ENCODE measurements at regions of chr7 and their contacts with region 1.

Region 1: DNA sequence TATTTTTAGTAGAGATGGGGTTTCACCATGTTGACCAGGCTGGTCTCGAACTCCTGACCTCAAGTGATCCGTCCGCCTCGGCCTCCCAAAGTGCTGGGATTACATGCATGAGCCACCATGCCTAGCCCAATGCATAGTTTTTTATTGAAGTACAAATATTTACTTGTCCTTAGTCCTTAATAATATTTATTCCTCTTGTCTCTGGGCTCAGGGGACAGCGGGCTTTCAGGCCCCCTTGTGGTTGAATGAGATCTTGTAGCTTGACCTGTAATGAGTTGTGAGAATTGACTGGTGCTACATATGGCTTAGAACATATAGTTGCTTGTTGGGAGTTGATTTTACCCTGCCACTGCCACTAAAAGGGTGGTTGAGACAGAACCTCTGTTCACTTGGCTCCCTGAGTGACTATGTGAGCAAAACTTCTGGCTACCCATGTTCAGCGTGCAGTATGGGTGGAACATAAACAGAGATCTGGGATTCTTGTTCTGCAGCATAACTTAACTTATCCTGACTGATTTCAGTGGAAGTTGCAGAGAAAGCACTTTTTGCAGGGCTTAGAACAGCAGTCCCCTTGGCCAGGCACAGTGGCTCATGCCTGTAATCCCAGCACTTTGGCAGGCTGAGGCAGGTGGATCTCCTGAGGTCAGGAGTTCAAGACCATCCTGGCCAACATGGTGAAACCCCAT is 14.9 kb downstream of the CCL26 start:
- DNase-seq: no peak
- H3K4me3 ChIP-seq: no peak overlapping the region
- H3K27ac ChIP-seq: no peak overlapping the region
- H3K4me1 ChIP-seq: no peaks in the 10 kb centered on the region
- H3K27me3 ChIP-seq: no peaks in the 10 kb centered on the region
- CTCF ChIP-seq: peak; percentile 20 to 56 (median 51)
- EP300 ChIP-seq: no peak
- POLR2A ChIP-seq: no peak
- RAD21 ChIP-seq: peak; percentile 47 to 69

Region 2: DNA sequence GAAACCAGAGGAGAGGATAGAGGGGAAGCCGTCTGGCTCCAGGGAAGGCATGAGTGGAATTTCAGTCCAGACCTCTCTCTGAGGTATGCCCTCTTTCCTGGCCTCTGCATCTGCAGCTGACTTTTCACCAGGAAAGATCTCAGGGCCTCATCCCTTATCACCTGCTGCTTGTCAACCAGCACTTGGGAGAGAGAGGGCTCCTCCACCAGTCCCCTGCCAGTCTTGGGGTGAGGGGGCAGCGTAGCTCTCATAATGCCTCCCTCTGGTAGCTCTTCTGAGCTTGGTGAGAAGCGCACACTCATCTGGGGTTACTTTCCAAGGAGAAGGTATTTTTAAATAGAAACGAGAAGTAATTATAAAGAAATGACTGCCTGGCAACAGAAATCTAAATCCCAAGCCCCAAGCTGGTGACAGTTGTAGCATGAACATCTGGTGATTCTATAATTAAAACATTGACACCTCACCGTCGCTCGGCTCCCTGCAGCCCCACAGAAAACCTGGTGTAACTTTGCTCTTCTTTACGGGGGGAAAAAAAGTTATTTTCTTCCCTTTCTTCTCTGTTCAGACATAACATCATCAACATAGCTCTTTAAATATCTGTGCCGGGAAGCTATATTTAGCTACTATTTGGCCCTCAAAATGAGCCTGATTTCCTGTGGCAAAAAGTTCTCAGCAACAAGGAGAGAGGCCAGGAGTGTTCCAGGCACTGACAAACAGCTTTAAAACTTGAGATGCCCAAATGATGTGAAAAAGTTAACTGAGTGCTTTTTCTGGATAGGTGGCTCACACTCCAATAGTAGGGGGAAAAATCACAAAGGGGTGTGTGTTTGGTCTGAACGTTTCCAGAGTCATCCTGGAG is 45.2 kb before region 1 on chr7:
- CTCF ChIA-PET with region 1: interaction called, 10 read pairs
- POLR2A ChIA-PET with region 1: no interaction called
- DNase-seq: no peak
- H3K4me3 ChIP-seq: no peak overlapping the region
- H3K27ac ChIP-seq: no peak overlapping the region
- H3K4me1 ChIP-seq: no peaks in the 10 kb centered on the region
- H3K27me3 ChIP-seq: no peaks in the 10 kb centered on the region
- CTCF ChIP-seq: no peak
- EP300 ChIP-seq: no peak
- POLR2A ChIP-seq: no peak
- RAD21 ChIP-seq: no peak

Region 3: DNA sequence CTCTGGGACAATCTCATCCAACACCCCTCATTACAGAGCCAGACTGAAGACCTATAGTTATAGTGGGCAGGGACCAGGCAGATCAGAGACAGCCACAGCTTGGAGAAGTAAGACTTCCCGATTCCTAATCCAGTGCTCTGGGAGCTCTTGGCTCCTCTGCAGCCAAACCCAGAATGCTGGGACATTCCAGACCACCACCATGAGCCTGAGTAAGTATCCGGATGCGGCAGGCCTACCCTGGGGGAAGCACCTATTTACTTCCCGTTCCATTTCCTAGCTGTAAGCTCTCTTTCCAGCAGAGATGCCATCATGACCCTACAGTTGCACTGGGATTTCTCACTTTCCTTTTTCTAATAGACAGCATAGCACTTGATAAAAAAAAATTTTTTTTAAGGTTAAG is 34.8 kb before region 1 on chr7:
- CTCF ChIA-PET with region 1: interaction called, 10 read pairs
- POLR2A ChIA-PET with region 1: no interaction called
- DNase-seq: no peak
- H3K4me3 ChIP-seq: no peak overlapping the region
- H3K27ac ChIP-seq: no peak overlapping the region
- H3K4me1 ChIP-seq: no peaks in the 10 kb centered on the region
- H3K27me3 ChIP-seq: no peaks in the 10 kb centered on the region
- CTCF ChIP-seq: no peak
- EP300 ChIP-seq: no peak
- POLR2A ChIP-seq: no peak
- RAD21 ChIP-seq: no peak

Region 4: GRCh38 chr7:75738987-75739795 is 17.9 kb before region 1 on chr7:
- CTCF ChIA-PET with region 1: interaction called, 39 read pairs
- POLR2A ChIA-PET with region 1: interaction called, 4 read pairs
- DNase-seq: peak; percentile 92 to 98
- H3K4me3 ChIP-seq: peak overlapping the region; percentile 80 to 95 (median 90)
- H3K27ac ChIP-seq: no peak overlapping the region
- H3K4me1 ChIP-seq: peaks cover 0 to 10% (median 8%) of the 10 kb centered on the region in 4 experiments; a peak in 6 of 7 replicates
- H3K27me3 ChIP-seq: peaks cover 0 to 5% (median 4%) of the 10 kb centered on the region in 4 experiments; a peak in 1 of 7 replicates
- CTCF ChIP-seq: no peak
- EP300 ChIP-seq: no peak
- POLR2A ChIP-seq: peak in 1 of 2 experiments; percentile 37; a peak in 1 of 3 replicates
- RAD21 ChIP-seq: no peak

Measured in H1 (cell line).